Stomach (tissue), 19 donors: ENCODE measurements at regions of chr1 and their contacts with region 1.

Region 1: GRCh38 chr1:36516372-36517325 is 33.9 kb upstream of the CSF3R start:
- DNase-seq: peak; percentile 67 to 81
- H3K4me3 ChIP-seq: no peak overlapping the region
- H3K27ac ChIP-seq: no peak overlapping the region
- H3K4me1 ChIP-seq: no peaks in the 10 kb centered on the region
- H3K27me3 ChIP-seq: peaks cover 0 to 45% (median 0%) of the 10 kb centered on the region in 3 donors
- CTCF ChIP-seq: peak in 5 of 7 experiments; percentile 29 to 66 (median 45)
- EP300 ChIP-seq: no peak
- POLR2A ChIP-seq: no peak

Region 2: DNA sequence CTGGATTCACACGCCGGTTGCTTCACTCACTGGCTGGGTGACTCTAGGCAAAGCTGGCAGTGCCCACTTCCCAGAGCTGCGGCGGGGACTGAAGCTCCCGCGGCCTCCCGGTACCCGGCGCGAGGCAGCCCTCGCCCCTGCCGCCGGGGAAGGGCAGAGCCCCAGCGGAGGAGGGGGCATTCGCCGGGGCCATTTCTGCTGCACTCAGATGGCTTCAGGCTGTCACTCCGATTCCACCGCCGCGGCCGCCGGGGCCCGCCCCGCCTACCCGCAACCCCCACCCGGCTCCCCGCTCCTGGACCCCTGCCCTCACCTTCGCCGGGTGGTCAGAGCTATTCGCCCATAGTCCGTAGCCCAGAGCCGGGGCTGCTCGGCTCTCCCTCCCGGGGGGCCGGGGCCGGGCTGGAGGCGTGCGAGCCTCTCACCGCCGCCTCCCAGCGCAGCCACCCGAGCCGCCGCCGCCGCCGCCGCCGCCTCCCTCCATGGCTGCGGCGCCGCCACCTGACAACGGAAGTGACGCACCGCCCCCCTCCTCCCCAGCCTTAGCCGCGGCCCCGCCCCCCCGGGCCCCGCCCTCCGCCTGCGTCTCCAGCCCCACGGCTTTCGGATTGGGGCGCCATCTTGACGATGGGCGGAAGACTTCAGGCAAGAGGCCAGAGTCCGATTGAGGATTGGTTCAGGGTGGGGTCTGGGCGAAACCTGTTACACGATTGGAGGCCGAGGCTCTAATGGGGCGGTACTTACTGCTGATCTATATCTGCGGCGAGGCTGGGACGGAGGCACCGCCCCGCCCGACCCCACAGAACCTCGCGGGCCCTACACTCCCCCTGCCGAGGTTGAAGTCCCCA is 131.0 kb before region 1 on chr1 and contains the start of gene STK40:
- intact Hi-C with region 1: no loop called
- DNase-seq: peak; percentile 99 to 100
- H3K4me3 ChIP-seq: peak within 1 kb of the TSS; percentile 64 to 91 (median 85)
- H3K27ac ChIP-seq: peak within 1 kb of the TSS; percentile 98 to 99 (median 98)
- H3K4me1 ChIP-seq: peaks cover 40 to 81% (median 64%) of the 10 kb centered on the region in 4 donors
- H3K27me3 ChIP-seq: no peaks in the 10 kb centered on the region
- CTCF ChIP-seq: no peak
- EP300 ChIP-seq: no peak
- POLR2A ChIP-seq: no peak
- total RNA-seq, gene STK40: 14.0 to 57.4 (median 28.3) TPM

Region 3: DNA sequence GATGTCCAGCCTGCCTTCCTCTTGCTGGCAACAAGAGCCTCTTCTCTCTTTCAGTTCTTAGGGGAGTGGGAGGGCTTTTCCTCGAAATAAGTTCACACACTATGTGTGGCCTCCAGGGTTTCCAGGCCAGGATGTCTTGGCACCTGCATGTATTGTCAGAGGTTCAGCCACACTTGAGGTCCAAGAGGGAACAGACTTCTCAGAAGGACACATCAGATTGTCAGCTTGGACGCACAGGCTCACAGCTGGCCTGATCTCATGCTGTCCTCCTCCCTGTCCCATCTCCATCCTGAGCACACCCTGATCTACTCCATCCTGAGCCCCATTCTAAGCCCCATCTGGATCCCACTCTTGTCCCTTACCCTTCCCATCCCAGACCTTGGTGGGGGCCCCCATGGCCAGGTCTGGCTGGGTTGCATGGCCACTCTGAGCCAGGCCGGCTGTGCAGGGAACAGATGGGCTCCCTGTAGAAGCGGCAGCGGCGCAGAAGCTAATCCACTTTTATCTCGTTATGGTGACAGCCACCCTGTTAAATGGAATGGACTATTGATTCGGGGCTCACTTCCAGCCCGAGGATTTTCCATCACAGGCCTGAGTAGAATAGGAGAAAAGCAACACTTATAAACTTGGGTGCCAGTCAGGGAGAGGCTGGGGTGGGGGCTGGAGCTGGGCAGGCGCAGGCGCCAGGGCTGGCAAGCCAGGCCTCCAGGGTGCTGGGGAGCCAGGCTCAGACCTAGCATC is 51.1 kb after region 1 on chr1:
- intact Hi-C with region 1: loop called (anchors 5 kb)
- DNase-seq: peak in 1 of 2 donors; percentile 36
- H3K4me3 ChIP-seq: no peak overlapping the region
- H3K27ac ChIP-seq: no peak overlapping the region
- H3K4me1 ChIP-seq: no peaks in the 10 kb centered on the region
- H3K27me3 ChIP-seq: peaks cover 0 to 27% (median 5%) of the 10 kb centered on the region in 3 donors
- CTCF ChIP-seq: no peak
- EP300 ChIP-seq: no peak
- POLR2A ChIP-seq: no peak